Prostate gland (tissue), 2 donors: ENCODE measurements at regions of chr6 and their contacts with region 1.

Region 1: DNA sequence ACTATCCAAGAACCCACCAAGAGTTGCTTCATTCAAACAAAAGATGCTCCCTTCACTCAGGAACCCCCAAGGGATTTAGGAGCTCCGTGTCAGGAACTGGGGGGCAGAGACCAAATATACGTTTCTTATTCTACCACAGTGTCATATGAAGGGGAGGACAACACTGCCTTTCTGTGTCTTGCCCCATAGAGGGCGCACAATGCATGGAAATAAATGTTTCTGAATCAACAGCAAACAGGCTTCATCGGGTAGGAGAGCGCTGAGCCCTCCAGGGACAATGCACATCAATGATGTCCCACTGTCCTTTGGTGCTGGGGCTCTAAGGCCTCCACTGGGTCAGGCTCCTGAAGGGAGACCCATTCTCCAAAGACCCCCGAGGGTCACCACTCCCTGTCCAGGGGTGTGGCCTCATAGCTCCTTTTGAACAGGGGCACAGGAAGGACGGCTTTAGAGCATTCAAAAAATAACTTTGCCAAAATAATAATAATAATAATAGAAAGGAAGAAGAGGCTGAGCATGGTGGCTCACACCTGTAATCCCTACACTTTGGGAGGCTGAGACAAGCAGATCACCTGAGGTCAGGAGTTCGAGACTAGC is 31.1 kb downstream of the PLG start:
- DNase-seq: peak; percentile 28
- H3K4me3 ChIP-seq: no peak overlapping the region
- H3K27ac ChIP-seq: no peak overlapping the region
- H3K4me1 ChIP-seq: no peaks in the 10 kb centered on the region
- H3K27me3 ChIP-seq: no peaks in the 10 kb centered on the region
- CTCF ChIP-seq: peak in 3 of 4 experiments; percentile 57 to 63 (median 60)
- POLR2A ChIP-seq: no peak

Region 2: DNA sequence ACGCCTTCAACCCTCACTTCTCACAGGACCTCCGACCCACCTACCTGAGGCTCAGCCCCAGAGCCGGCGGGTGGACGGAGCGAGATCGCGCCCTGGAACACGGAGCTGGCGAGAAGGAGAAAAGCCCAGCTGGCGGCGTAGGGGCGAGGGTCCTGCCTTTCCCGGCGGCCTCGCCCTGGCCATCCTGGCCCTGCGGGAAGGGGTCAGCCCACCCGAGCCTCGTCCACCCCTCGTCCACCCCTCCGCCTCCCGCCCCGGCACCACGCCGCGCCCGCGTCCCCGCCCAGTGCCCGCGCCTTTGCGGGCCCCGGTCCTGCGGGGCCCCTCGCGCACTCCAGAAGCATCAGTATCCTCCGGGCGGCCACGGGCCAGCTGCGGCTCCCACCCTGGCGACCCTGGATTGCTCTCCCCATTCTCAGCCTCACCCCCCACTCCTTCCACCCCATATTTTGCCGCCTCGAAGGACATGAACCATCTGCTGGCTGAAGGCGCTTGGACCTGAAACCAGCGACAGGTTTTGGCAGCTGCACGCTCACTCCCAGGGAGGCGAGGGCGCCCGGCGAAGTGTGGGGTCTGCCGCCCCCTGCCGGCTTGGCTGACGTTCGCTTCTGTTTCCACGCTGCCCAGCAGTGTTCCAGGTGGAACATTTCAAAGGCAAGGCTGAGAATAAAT is 34.0 kb after region 1 on chr6:
- intact Hi-C with region 1: loop called (anchors 2 kb)
- DNase-seq: peak; percentile 62
- H3K4me3 ChIP-seq: peak overlapping the region; percentile 36 to 48
- H3K27ac ChIP-seq: peak overlapping the region in 1 of 2 donors; percentile 62
- H3K4me1 ChIP-seq: no peaks in the 10 kb centered on the region
- H3K27me3 ChIP-seq: no peaks in the 10 kb centered on the region
- CTCF ChIP-seq: peak; percentile 27 to 83 (median 79)
- POLR2A ChIP-seq: no peak

Region 3: DNA sequence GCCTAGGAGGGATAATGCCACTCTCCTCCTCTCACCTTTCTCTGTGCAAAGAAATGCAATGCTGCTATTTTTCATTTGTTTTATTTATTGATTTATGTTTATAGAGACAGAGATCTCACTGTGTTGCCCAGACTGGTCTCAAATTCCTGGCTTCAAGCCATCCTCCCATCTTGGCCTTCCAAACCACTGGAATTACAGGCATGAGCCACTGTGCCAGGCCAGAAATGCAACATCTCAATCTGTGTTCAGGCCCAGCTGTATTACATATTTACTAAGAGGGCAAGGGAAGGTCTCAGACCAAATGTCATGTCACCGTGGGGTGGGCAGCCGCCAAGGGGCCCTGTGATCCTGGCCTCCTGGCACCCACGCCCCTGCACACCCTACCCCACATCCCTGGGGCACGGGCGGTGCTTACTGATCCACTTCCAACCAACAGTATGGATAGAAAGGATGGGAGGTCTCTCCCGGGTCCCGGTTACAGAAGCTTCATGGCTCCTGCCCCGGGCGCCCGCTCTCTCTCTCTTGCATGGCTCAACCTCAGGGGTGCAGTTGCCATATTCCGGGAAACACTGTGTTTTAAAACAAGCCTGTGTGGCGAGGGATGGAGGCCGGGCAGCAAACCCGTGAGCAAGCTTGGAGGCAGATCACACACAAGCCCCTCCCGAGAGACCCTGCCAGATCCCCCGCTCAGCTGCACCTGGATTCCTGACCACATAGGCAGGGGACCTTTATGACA is 428.9 kb after region 1 on chr6:
- intact Hi-C with region 1: no loop called
- DNase-seq: peak; percentile 40
- H3K4me3 ChIP-seq: no peak overlapping the region
- H3K27ac ChIP-seq: no peak overlapping the region
- H3K4me1 ChIP-seq: peaks cover 3% of the 10 kb centered on the region
- H3K27me3 ChIP-seq: no peaks in the 10 kb centered on the region
- CTCF ChIP-seq: no peak
- POLR2A ChIP-seq: no peak